ENCODE measurements at regions of chr7 and their contacts with region 1.

Region 1: DNA sequence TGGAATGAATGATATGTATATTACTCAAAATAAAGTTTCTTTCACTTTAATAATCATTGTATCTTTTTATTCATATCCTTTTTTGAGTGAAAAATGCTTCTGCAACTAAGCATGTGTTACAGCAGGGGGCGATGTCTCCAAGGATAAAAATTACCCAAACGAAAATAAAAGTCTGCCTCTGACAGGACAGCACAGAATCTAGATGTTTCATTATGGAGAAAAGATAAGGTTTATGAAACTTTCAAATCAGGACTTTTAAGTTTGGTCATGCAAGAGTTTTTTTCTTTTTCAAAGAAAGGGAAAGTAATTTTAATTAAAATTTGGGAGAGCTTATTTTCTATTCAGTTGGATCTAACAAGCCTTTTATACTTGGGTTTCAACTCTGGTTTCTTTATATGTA is 48.4 kb downstream of the TES start:
- DNase-seq: peak; percentile 24
- CTCF ChIP-seq: peak; percentile 67

Region 2: GRCh38 chr7:116271963-116272839 is 13.5 kb after region 1 on chr7:
- CTCF ChIA-PET with region 1: interaction called, 16 read pairs
- POLR2A ChIA-PET with region 1: no interaction called
- DNase-seq: no peak
- CTCF ChIP-seq: no peak

Region 3: GRCh38 chr7:116280803-116281202 is 22.1 kb after region 1 on chr7:
- CTCF ChIA-PET with region 1: interaction called, 19 read pairs
- POLR2A ChIA-PET with region 1: no interaction called
- DNase-seq: no peak
- CTCF ChIP-seq: no peak

Region 4: GRCh38 chr7:116340943-116341907 is 82.5 kb after region 1 on chr7:
- CTCF ChIA-PET with region 1: interaction called, 10 read pairs
- POLR2A ChIA-PET with region 1: no interaction called
- DNase-seq: no peak
- CTCF ChIP-seq: peak; percentile 7

Region 5: GRCh38 chr7:116525913-116526861 is 267.5 kb after region 1 on chr7:
- CTCF ChIA-PET with region 1: interaction called, 80 read pairs
- POLR2A ChIA-PET with region 1: no interaction called
- DNase-seq: peak; percentile 91
- CTCF ChIP-seq: peak; percentile 90

Region 6: DNA sequence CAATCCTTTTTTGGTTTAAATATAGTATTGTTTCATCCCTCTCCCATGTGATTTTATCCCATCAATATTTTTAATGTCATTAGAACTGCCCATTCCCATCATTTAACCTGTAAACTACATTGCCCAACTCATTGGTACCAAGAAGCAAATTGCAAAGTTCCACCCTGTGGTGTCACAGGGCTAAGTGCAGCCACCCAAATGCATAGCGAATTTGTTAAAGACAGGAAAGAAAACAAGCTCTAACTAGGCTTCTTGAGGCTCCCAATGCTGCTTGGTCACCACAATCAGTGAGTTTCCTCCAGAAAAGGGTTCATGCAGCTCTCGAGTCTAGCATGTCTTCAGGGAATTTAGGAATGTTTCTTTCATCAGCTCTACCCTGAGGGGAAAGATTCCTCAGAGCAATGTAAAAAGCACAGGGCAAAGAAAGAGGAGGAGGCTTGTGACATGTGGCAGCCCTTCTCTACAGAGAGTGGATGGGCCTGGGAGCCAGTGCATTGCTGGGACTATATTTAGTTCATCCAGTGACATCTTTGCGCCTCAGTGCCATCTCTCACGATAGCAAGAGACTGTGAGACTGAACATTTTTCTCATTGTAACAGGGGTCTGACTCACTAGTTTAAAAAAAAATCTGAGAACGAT is 324.2 kb after region 1 on chr7:
- CTCF ChIA-PET with region 1: interaction called, 79 read pairs
- POLR2A ChIA-PET with region 1: no interaction called
- DNase-seq: no peak
- CTCF ChIP-seq: no peak